ENCODE measurements at regions of chr11 and their contacts with region 1.

Region 1: GRCh38 chr11:110362971-110363509 is 66.6 kb upstream of the RDX start:
- DNase-seq: no peak
- ATAC-seq: peak; percentile 73
- H3K4me3 ChIP-seq: no peak overlapping the region
- H3K27ac ChIP-seq: peak overlapping the region; percentile 62; the same call in 1 of the 2 replicates
- H3K4me1 ChIP-seq: peaks cover 7% of the 10 kb centered on the region
- H3K27me3 ChIP-seq: no peaks in the 10 kb centered on the region
- CTCF ChIP-seq: no peak
- EP300 ChIP-seq: no peak
- POLR2A ChIP-seq: no peak
- RAD21 ChIP-seq: no peak

Region 2: GRCh38 chr11:110279881-110280280 is 83.2 kb before region 1 on chr11:
- CTCF ChIA-PET with region 1: no interaction called
- POLR2A ChIA-PET with region 1: no interaction called
- RAD21 ChIA-PET with region 1: no interaction called
- SMC1A ChIA-PET with region 1: interaction called, 10 read pairs
- in situ Hi-C with region 1: no loop called
- intact Hi-C with region 1: no loop called
- DNase-seq: no peak
- ATAC-seq: peak; percentile 30; the same call in 2 of the 3 replicates
- H3K4me3 ChIP-seq: no peak overlapping the region
- H3K27ac ChIP-seq: no peak overlapping the region
- H3K4me1 ChIP-seq: no peaks in the 10 kb centered on the region
- H3K27me3 ChIP-seq: no peaks in the 10 kb centered on the region
- CTCF ChIP-seq: no peak
- EP300 ChIP-seq: no peak
- POLR2A ChIP-seq: no peak
- RAD21 ChIP-seq: no peak

Region 3: GRCh38 chr11:110296226-110297075 is 66.6 kb before region 1 on chr11 and contains the start of gene RDX:
- CTCF ChIA-PET with region 1: interaction called, 10 read pairs
- POLR2A ChIA-PET with region 1: interaction called, 6 read pairs
- RAD21 ChIA-PET with region 1: interaction called, 4 read pairs
- SMC1A ChIA-PET with region 1: interaction called, 17 read pairs
- in situ Hi-C with region 1: no loop called
- intact Hi-C with region 1: no loop called
- DNase-seq: no peak
- ATAC-seq: peak; percentile 73
- H3K4me3 ChIP-seq: peak within 1 kb of the TSS; percentile 98
- H3K27ac ChIP-seq: peak within 1 kb of the TSS; percentile 94
- H3K4me1 ChIP-seq: no peaks in the 10 kb centered on the region
- H3K27me3 ChIP-seq: no peaks in the 10 kb centered on the region
- CTCF ChIP-seq: peak in 1 of 3 experiments; percentile 20; a peak in 1 of 6 replicates
- EP300 ChIP-seq: no peak
- POLR2A ChIP-seq: peak; percentile 82
- RAD21 ChIP-seq: peak; percentile 38; the same call in 1 of the 2 replicates
- polyA plus RNA-seq, gene RDX: 37.4 to 40.3 TPM

Region 4: GRCh38 chr11:110349138-110349996 is 13.7 kb before region 1 on chr11:
- CTCF ChIA-PET with region 1: interaction called, 9 read pairs
- POLR2A ChIA-PET with region 1: interaction called, 7 read pairs
- RAD21 ChIA-PET with region 1: interaction called, 11 read pairs
- SMC1A ChIA-PET with region 1: interaction called, 31 read pairs
- in situ Hi-C with region 1: no loop called
- intact Hi-C with region 1: no loop called
- DNase-seq: peak; percentile 94
- ATAC-seq: peak; percentile 86
- H3K4me3 ChIP-seq: peak overlapping the region; percentile 38; the same call in 1 of the 2 replicates
- H3K27ac ChIP-seq: peak overlapping the region; percentile 96
- H3K4me1 ChIP-seq: peaks cover 43% of the 10 kb centered on the region
- H3K27me3 ChIP-seq: no peaks in the 10 kb centered on the region
- CTCF ChIP-seq: peak in 1 of 3 experiments; percentile 33; a peak in 2 of 6 replicates
- EP300 ChIP-seq: peak; percentile 94 to 99
- POLR2A ChIP-seq: peak; percentile 30; the same call in 1 of the 2 replicates
- RAD21 ChIP-seq: peak; percentile 51

Region 5: GRCh38 chr11:110392056-110392455 is 29.0 kb after region 1 on chr11:
- CTCF ChIA-PET with region 1: no interaction called
- POLR2A ChIA-PET with region 1: no interaction called
- RAD21 ChIA-PET with region 1: no interaction called
- SMC1A ChIA-PET with region 1: no interaction called
- in situ Hi-C with region 1: no loop called
- intact Hi-C with region 1: no loop called
- DNase-seq: no peak
- ATAC-seq: no peak
- H3K4me3 ChIP-seq: no peak overlapping the region
- H3K27ac ChIP-seq: no peak overlapping the region
- H3K4me1 ChIP-seq: no peaks in the 10 kb centered on the region
- H3K27me3 ChIP-seq: no peaks in the 10 kb centered on the region
- CTCF ChIP-seq: no peak
- EP300 ChIP-seq: no peak
- POLR2A ChIP-seq: no peak
- RAD21 ChIP-seq: no peak

Region 6: GRCh38 chr11:110691926-110692325 is 328.9 kb after region 1 on chr11:
- CTCF ChIA-PET with region 1: no interaction called
- POLR2A ChIA-PET with region 1: no interaction called
- RAD21 ChIA-PET with region 1: no interaction called
- SMC1A ChIA-PET with region 1: no interaction called
- in situ Hi-C with region 1: no loop called
- intact Hi-C with region 1: no loop called
- DNase-seq: no peak
- ATAC-seq: no peak
- H3K4me3 ChIP-seq: no peak overlapping the region
- H3K27ac ChIP-seq: no peak overlapping the region
- H3K4me1 ChIP-seq: no peaks in the 10 kb centered on the region
- H3K27me3 ChIP-seq: no peaks in the 10 kb centered on the region
- CTCF ChIP-seq: no peak
- EP300 ChIP-seq: no peak
- POLR2A ChIP-seq: no peak
- RAD21 ChIP-seq: no peak